Mammary epithelial cell (primary cell): ENCODE measurements at regions of chrX and their contacts with region 1.

Region 1: DNA sequence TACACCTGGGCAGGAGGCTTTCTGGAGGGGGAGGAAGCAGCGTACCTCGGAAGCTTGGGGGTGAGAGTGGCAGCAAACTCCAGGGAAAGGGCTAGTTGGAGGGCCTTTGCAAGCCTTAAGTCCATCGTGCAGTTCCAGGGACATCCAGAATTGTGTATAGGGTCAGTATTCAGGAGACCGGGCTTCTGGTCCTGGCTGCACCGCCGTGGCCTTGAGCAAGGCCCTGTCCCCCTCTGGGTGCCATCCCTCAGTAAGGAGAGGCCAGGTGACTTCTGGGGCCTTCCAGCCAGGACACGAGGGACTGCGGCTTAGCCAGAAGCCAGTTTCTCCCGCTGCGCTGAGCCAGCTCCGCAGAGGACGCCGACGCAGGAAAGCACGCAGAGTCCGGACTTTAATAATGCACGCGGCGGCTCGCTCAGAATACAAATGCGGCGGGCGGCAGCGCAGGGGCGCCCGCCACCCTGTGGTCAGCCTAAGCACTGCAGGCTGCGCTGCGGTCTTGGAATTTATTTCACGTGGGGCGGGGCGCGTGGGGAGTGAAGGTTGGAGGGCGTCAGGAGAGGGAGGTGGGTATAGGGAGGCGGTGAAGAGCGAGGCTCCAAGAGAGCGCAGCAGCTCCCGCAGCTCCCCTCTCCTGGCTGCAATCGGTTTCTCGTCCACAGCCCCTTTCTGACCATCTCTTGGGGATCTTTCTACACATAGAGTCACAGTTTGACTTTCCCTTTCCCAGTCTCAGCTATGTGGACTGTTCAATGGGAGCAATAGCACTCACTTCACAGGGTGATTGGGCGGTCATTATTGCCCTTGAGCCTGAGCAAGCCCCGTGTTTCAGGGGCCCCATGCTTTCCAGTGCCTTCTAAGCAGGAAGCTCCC is 94.1 kb upstream of the GPR50 start:
- DNase-seq: peak; percentile 33
- H3K4me3 ChIP-seq: peak overlapping the region in 1 of 3 experiments; percentile 20
- H3K27ac ChIP-seq: no peak overlapping the region
- H3K4me1 ChIP-seq: peaks cover 4% of the 10 kb centered on the region
- H3K27me3 ChIP-seq: no peaks in the 10 kb centered on the region
- CTCF ChIP-seq: peak; percentile 50 to 76

Region 2: DNA sequence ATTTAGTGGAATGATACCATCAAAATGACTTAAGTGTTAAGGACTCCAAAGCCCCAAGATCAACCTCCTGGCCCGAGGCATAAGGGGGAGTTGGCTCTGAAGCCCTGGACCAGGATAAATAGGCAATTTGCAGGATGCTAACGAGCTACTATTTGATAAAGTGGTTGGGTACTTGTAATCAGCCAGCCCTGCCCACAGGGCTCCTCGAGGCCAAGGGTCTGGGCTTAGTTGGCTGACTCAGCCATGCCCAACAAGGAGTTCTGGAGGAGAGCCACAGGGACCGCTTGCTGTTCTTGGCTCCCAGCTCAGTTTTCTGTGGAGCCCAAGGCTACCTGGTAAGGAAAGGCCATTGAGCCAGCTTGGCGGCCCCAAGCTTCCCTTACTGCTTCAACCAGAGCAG is 91.4 kb before region 1 on chrX:
- CTCF ChIA-PET with region 1: no interaction called
- dilution Hi-C with region 1: no loop called
- in situ Hi-C with region 1: no loop called
- intact Hi-C with region 1: loop called (anchors 5 kb)
- DNase-seq: no peak
- H3K4me3 ChIP-seq: no peak overlapping the region
- H3K27ac ChIP-seq: no peak overlapping the region
- H3K4me1 ChIP-seq: no peaks in the 10 kb centered on the region
- H3K27me3 ChIP-seq: no peaks in the 10 kb centered on the region
- CTCF ChIP-seq: no peak